Natural killer cell (primary cell): ENCODE measurements at regions of chr1 and their contacts with region 1.

Region 1: GRCh38 chr1:40143891-40144575 is 17.2 kb upstream of the RLF start:
- DNase-seq: peak in 1 of 2 donors; percentile 85
- ATAC-seq: peak; percentile 75 to 84 (median 82)
- H3K4me3 ChIP-seq: no peak overlapping the region
- H3K4me3 Mint-ChIP-seq: no peak overlapping the region
- H3K27ac ChIP-seq: no peak overlapping the region
- H3K27ac Mint-ChIP-seq: no peak overlapping the region
- H3K4me1 ChIP-seq: no peaks in the 10 kb centered on the region
- H3K4me1 Mint-ChIP-seq: peaks cover 4 to 6% of the 10 kb centered on the region in 2 donors
- H3K27me3 ChIP-seq: peaks cover 2% of the 10 kb centered on the region
- H3K27me3 Mint-ChIP-seq: peaks cover 35 to 50% of the 10 kb centered on the region in 2 donors
- CTCF ChIP-seq: peak; percentile 79

Region 2: GRCh38 chr1:40107290-40108262 is 36.5 kb before region 1 on chr1:
- intact Hi-C with region 1: no loop called
- DNase-seq: no peak
- ATAC-seq: no peak
- H3K4me3 ChIP-seq: no peak overlapping the region
- H3K4me3 Mint-ChIP-seq: no peak overlapping the region
- H3K27ac ChIP-seq: no peak overlapping the region
- H3K27ac Mint-ChIP-seq: no peak overlapping the region
- H3K4me1 ChIP-seq: no peaks in the 10 kb centered on the region
- H3K4me1 Mint-ChIP-seq: no peaks in the 10 kb centered on the region
- H3K27me3 ChIP-seq: no peaks in the 10 kb centered on the region
- H3K27me3 Mint-ChIP-seq: peaks cover 26 to 48% of the 10 kb centered on the region in 2 donors
- CTCF ChIP-seq: no peak

Region 3: DNA sequence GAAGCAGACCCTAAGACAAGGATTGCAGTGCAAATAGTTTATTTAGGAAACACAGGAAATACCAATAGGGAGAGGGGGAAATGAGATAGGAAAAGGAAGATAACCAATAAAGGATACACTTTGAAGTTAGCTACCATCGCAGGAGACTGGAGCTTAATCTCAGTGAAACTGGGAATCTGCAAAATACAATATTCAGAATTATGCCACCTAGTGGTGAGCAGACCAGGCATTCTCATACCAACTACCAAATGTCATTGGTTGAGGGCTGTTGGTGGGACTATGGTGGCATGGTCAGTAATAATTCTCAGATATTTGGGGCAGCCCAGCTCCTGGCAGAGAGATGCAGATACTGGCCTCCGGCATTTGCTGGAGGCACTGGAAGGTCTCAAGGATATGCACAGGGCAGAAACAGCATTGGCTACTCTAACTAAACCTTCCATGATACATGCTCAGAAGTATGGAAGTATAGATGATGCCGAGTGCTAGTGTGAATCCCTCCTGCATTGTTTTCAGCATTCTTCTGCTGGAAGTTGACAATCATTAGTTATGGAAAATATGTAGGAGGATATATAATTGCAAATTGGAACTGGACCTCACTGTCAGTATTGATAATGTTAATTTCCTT is 294.5 kb after region 1 on chr1:
- intact Hi-C with region 1: loop called (anchors 1 kb)
- DNase-seq: peak in 1 of 2 donors; percentile 67
- ATAC-seq: peak; percentile 62 to 69 (median 66)
- H3K4me3 ChIP-seq: no peak overlapping the region
- H3K4me3 Mint-ChIP-seq: no peak overlapping the region
- H3K27ac ChIP-seq: no peak overlapping the region
- H3K27ac Mint-ChIP-seq: no peak overlapping the region
- H3K4me1 ChIP-seq: no peaks in the 10 kb centered on the region
- H3K4me1 Mint-ChIP-seq: peaks cover 0 to 7% of the 10 kb centered on the region in 2 donors
- H3K27me3 ChIP-seq: no peaks in the 10 kb centered on the region
- H3K27me3 Mint-ChIP-seq: no peaks in the 10 kb centered on the region
- CTCF ChIP-seq: peak; percentile 78